ENCODE measurements at regions of chr5 and their contacts with region 1.

Region 1: GRCh38 chr5:115625579-115626444 is at the start of gene TMED7:
- DNase-seq: peak; percentile 98
- ATAC-seq: peak; percentile 92
- H3K4me3 ChIP-seq: peak within 1 kb of the TSS; percentile 91
- H3K27ac ChIP-seq: peak within 1 kb of the TSS; percentile 63
- H3K4me1 ChIP-seq: peaks cover 15% of the 10 kb centered on the region
- H3K27me3 ChIP-seq: no peaks in the 10 kb centered on the region
- CTCF ChIP-seq: no peak
- total RNA-seq, gene TMED7: 234 and 278 TPM in 2 replicates

Region 2: GRCh38 chr5:115136294-115136693 is 489.5 kb before region 1 on chr5:
- CTCF ChIA-PET with region 1: no interaction called
- POLR2A ChIA-PET with region 1: no interaction called
- intact Hi-C with region 1: no loop called
- DNase-seq: no peak
- ATAC-seq: no peak
- H3K4me3 ChIP-seq: no peak overlapping the region
- H3K27ac ChIP-seq: no peak overlapping the region
- H3K4me1 ChIP-seq: no peaks in the 10 kb centered on the region
- H3K27me3 ChIP-seq: peaks cover 24% of the 10 kb centered on the region
- CTCF ChIP-seq: no peak

Region 3: DNA sequence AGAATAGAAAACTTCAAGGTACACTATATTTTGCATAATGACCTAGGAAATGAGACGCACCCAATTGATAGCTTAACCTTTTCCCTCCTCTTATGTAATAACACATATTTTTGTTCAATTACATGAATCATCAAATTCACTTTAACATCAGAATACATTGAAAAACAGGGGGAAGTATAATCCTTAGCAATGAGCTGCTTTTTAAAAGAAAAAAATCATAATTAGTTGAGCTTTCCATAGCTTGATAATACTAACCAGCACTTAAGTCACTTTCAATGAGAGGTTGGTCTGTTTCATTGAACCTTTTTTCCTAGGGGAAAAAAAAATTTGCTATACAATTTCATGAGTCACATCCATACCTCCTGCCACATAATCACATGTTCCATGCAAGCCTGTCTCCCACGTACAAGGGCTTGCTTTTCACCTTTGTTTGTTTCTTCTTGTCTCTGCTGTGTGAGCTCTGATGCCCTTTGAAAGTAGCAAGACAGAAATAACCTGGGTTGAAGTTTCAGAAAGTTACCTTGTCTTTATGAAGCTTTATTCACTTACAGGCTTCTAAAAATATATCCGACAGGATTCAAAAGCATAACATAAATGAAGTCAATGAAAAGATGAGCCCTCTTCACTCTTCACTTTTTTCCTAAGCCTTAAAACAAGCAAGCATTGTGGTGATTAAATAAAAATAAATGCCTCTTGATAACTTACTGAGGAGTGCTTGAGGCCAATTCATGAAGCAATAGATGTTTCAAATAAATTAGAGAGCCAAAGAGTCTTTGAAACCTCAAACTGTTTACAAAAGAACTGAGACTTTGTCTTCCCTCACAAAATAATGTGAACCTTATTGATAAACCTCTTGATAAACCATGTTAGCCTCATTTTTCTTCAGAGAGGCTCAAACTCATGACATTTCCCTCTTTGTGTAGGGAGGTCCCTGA is 189.8 kb before region 1 on chr5:
- CTCF ChIA-PET with region 1: no interaction called
- POLR2A ChIA-PET with region 1: no interaction called
- intact Hi-C with region 1: no loop called
- DNase-seq: peak; percentile 75
- ATAC-seq: peak; percentile 69
- H3K4me3 ChIP-seq: no peak overlapping the region
- H3K27ac ChIP-seq: peak overlapping the region; percentile 67
- H3K4me1 ChIP-seq: peaks cover 58% of the 10 kb centered on the region
- H3K27me3 ChIP-seq: no peaks in the 10 kb centered on the region
- CTCF ChIP-seq: no peak

Region 4: DNA sequence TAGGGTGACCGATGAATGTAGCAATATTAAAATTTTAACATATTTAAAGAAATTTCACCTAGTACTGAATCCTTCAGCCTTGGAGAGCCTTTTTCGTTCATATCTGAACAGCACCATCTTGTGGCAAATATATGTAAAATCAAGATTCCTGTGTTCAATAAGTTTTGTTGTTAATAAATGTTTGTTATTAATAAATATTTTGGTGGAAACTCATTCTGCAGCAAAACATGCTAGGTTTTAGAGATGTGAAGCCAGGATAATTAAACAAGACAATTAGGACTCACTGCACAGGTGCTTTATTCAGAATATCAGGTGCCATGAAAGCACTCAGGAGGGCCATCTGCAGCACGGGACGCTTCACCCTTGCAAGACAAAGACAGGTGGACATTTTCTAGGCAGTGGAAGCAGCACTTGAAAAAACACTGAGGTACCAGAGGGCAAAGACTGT is 39.2 kb before region 1 on chr5:
- CTCF ChIA-PET with region 1: no interaction called
- POLR2A ChIA-PET with region 1: no interaction called
- intact Hi-C with region 1: no loop called
- DNase-seq: peak; percentile 53
- ATAC-seq: peak; percentile 51
- H3K4me3 ChIP-seq: no peak overlapping the region
- H3K27ac ChIP-seq: no peak overlapping the region
- H3K4me1 ChIP-seq: peaks cover 13% of the 10 kb centered on the region; the same call in 1 of the 2 replicates
- H3K27me3 ChIP-seq: no peaks in the 10 kb centered on the region
- CTCF ChIP-seq: peak; percentile 75

Region 5: GRCh38 chr5:115611873-115612272 is 13.9 kb before region 1 on chr5:
- CTCF ChIA-PET with region 1: no interaction called
- POLR2A ChIA-PET with region 1: no interaction called
- intact Hi-C with region 1: loop called (anchors 2 kb)
- DNase-seq: no peak
- ATAC-seq: no peak
- H3K4me3 ChIP-seq: no peak overlapping the region
- H3K27ac ChIP-seq: no peak overlapping the region
- H3K4me1 ChIP-seq: no peaks in the 10 kb centered on the region
- H3K27me3 ChIP-seq: no peaks in the 10 kb centered on the region
- CTCF ChIP-seq: no peak

Region 6: GRCh38 chr5:115898656-115899055 is 272.8 kb after region 1 on chr5:
- CTCF ChIA-PET with region 1: no interaction called
- POLR2A ChIA-PET with region 1: no interaction called
- intact Hi-C with region 1: no loop called
- DNase-seq: peak; percentile 32
- ATAC-seq: peak; percentile 64; the same call in 1 of the 2 replicates
- H3K4me3 ChIP-seq: no peak overlapping the region
- H3K27ac ChIP-seq: no peak overlapping the region
- H3K4me1 ChIP-seq: peaks cover 19% of the 10 kb centered on the region
- H3K27me3 ChIP-seq: no peaks in the 10 kb centered on the region
- CTCF ChIP-seq: no peak

Measured in PC-3 (cell line).